ENCODE measurements at regions of chr7 and their contacts with region 1.

Region 1: DNA sequence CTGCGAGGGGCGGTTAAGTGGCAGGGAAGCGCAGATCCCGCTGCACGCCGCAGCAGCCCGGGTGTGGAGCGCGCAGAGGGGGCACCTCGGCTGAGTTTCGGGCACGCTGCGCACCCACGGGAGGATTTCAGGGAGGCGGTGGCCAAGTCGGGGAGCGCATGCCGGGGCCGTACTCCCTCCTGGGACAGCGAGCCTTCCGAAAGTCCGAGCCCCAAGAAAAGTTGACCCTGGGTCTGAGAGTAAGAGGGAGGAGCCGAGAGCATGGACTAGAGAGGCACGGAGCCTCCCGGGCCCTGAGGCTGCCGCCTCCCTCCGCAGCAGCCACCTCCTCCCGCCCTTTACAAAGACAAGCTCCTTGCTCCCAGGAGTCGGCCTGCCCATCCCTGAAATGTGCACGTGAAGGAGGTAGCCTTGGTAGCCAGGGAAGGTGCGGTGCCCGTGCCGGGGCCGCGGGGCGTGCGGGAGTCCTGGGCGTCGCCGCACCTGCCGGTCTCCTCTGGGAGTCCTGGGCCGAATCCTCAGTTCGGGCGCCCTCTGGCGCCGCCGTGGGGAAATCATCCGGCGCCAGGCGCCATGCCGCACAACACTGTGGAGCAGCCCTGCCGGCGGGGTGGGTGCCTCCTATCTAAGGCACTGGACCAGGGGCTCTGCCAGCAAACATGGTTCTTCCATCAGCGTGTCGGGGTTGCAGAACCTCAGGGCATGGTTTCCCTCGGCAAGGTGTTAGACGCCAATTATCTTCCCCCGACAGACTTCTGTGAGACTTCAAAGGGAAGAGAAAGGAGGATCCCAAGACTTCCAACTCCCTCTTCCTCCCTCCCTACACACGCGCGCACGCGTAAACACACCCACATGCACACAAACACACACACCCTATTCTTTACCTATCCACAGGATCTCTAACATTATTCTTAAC is 104.0 kb downstream of the TRIL start:
- DNase-seq: peak; percentile 91
- H3K4me3 Mint-ChIP-seq: peak overlapping the region; percentile 72
- H3K27ac Mint-ChIP-seq: no peak overlapping the region
- H3K4me1 Mint-ChIP-seq: peaks cover 9% of the 10 kb centered on the region
- H3K27me3 Mint-ChIP-seq: peaks cover 41% of the 10 kb centered on the region

Region 2: GRCh38 chr7:28298870-28299518 is 555.1 kb before region 1 on chr7:
- intact Hi-C with region 1: loop called (anchors 5 kb)
- DNase-seq: no peak
- H3K4me3 Mint-ChIP-seq: no peak overlapping the region
- H3K27ac Mint-ChIP-seq: no peak overlapping the region
- H3K4me1 Mint-ChIP-seq: no peaks in the 10 kb centered on the region
- H3K27me3 Mint-ChIP-seq: peaks cover 23% of the 10 kb centered on the region

Region 3: GRCh38 chr7:28389504-28390395 is 464.3 kb before region 1 on chr7:
- intact Hi-C with region 1: loop called (anchors 1 kb)
- DNase-seq: no peak
- H3K4me3 Mint-ChIP-seq: no peak overlapping the region
- H3K27ac Mint-ChIP-seq: no peak overlapping the region
- H3K4me1 Mint-ChIP-seq: no peaks in the 10 kb centered on the region
- H3K27me3 Mint-ChIP-seq: peaks cover 30% of the 10 kb centered on the region

Region 4: DNA sequence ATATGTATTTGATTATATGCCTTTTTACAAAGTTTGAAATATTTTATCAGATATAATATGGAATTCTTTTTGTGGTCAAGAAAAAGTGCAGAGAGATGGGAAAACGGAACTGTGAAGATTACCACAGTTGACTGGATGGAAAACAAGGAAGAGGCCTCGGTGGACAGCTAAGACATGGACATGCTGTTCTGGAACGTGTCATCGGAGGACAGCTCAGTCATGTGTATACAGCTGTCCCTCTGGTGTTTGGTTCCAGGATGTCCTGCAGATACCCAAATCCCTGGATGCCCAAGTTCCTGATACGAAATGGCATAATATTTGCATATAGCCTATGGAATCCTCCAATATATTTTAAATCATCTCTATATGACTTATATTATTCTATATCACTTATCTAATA is 54.7 kb after region 1 on chr7:
- intact Hi-C with region 1: no loop called
- DNase-seq: no peak
- H3K4me3 Mint-ChIP-seq: no peak overlapping the region
- H3K27ac Mint-ChIP-seq: no peak overlapping the region
- H3K4me1 Mint-ChIP-seq: no peaks in the 10 kb centered on the region
- H3K27me3 Mint-ChIP-seq: peaks cover 4% of the 10 kb centered on the region

Region 5: DNA sequence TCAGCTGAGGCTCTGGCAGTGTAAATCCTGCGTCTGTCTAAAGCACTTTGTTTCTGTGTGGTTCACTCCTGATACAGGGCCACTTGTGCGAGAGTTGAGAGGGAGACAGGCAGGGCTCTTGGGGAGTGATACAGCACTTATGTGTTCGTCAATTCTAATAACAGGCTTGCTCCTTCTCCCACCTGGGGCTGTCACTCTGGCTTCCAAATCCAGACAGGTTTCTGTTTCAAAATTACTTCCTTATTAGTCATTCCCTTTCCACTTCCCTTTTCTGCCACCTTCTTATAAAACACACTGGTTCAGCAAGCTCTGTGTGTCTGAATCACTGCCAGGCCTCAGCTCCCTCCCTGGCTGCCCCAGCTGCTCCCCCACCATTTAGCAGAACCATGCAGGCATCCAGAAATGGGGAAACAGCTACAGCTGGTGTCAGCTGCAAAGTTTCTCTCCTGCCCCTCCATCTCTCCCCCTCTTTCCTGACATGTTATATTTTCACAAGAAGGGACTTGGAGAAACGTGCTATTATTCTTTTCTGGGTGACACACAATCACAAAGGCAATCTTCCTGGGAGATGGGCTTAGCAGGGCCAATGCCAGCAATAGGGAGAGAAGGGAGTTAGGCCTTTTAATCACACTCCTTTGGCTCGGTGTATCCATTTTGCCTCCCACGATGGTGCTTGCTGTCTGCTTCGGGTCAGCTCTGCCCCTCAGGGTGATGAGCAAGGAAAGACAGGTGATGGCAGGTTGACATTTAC is 1371.9 kb after region 1 on chr7:
- intact Hi-C with region 1: no loop called
- DNase-seq: no peak
- H3K4me3 Mint-ChIP-seq: no peak overlapping the region
- H3K27ac Mint-ChIP-seq: no peak overlapping the region
- H3K4me1 Mint-ChIP-seq: peaks cover 11% of the 10 kb centered on the region
- H3K27me3 Mint-ChIP-seq: peaks cover 9% of the 10 kb centered on the region